A549 (cell line): ENCODE measurements at regions of chr10 and their contacts with region 1.

Region 1: DNA sequence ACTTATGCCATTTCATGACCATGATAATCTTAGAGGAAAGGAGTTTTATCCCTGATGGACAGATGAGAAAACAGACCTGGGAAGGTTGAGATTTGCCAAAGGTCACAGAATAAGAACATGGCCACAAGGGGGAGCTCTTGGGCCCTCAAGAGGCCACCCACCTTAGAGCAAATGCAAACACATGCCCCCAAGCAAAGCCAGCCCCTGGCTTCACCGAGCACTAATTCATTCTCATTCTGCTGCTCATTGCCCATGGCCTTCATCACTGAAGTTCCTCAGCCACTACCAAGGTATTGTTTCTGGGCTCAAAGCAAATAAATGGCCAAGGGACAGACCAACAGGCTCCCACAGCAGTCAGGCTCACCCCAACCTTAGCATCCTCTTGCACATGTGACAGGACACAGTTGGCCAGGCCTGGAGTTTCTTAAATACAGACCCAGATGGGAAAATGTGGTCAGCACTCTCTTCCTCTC is 44.2 kb downstream of the PDLIM1 start:
- DNase-seq: peak; percentile 48 to 80
- ATAC-seq: peak; percentile 66 to 82
- H3K4me3 ChIP-seq: no peak overlapping the region
- H3K27ac ChIP-seq: peak overlapping the region; percentile 20 to 33; a peak in 4 of 6 replicates
- H3K4me1 ChIP-seq: peaks cover 28% of the 10 kb centered on the region
- CTCF ChIP-seq: peak; percentile 92
- EP300 ChIP-seq: no peak
- POLR2A ChIP-seq: no peak
- RAD21 ChIP-seq: peak; percentile 94 to 96

Region 2: GRCh38 chr10:95183271-95184230 is 63.1 kb before region 1 on chr10:
- CTCF ChIA-PET with region 1: interaction called, 151 read pairs
- POLR2A ChIA-PET with region 1: no interaction called
- DNase-seq: peak; percentile 87 to 92
- ATAC-seq: peak; percentile 98 to 99
- H3K4me3 ChIP-seq: peak overlapping the region; percentile 57
- H3K27ac ChIP-seq: peak overlapping the region; percentile 89 to 99
- H3K4me1 ChIP-seq: peaks cover 26% of the 10 kb centered on the region
- CTCF ChIP-seq: peak; percentile 100
- EP300 ChIP-seq: no peak
- POLR2A ChIP-seq: peak; percentile 27; the same call in 1 of the 2 replicates
- RAD21 ChIP-seq: peak; percentile 79 to 98

Region 3: GRCh38 chr10:95208702-95209391 is 37.8 kb before region 1 on chr10:
- CTCF ChIA-PET with region 1: interaction called, 64 read pairs
- POLR2A ChIA-PET with region 1: no interaction called
- DNase-seq: peak in 1 of 2 experiments; percentile 37
- ATAC-seq: peak in 1 of 2 experiments; percentile 76; a peak in 4 of 6 replicates
- H3K4me3 ChIP-seq: no peak overlapping the region
- H3K27ac ChIP-seq: peak overlapping the region; percentile 61 to 84
- H3K4me1 ChIP-seq: peaks cover 21% of the 10 kb centered on the region
- CTCF ChIP-seq: peak; percentile 79
- EP300 ChIP-seq: no peak
- POLR2A ChIP-seq: no peak
- RAD21 ChIP-seq: peak; percentile 70 to 74

Region 4: DNA sequence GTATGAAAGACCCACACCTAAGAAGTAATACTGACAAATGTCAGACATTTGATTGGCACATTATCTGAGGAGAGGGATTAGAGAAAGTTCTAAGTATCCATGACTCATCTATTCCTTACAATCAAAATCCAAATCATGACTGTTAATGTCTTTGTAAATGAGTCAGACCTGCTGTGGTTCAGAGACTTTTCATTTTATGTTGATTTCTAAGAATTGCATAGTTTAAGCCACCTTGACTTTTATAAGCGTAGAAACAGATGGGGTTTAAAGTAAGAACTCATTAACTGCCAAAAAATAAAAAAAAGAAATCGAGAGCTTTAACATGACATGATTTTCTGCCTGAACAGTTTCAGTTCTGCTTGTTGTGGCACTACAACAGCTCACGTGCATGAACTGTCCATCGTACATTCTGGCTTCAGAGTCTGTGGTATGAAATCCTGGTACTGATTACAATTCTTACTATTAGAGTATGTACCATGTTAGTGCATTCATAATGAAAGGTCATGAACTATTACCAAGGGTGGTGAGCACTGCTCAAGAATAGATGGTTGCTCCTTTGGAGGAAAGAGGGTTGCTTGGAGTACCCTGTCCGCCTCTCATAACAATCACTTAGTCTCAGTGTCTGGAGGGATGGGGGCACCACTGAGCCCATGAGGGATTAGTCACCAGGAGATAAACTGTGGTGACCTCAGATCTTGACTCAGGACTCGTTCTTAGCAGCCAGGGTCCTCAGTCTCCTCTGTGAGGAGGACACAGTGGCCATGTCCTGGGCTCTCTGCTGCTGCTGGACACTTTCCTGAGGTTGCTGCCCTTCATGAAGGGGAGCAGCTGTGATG is 10.3 kb before region 1 on chr10:
- CTCF ChIA-PET with region 1: interaction called, 48 read pairs
- POLR2A ChIA-PET with region 1: no interaction called
- DNase-seq: no peak
- ATAC-seq: peak; percentile 55 to 56; a peak in 4 of 6 replicates
- H3K4me3 ChIP-seq: no peak overlapping the region
- H3K27ac ChIP-seq: peak overlapping the region; percentile 63 to 85
- H3K4me1 ChIP-seq: peaks cover 34% of the 10 kb centered on the region
- CTCF ChIP-seq: no peak
- EP300 ChIP-seq: no peak
- POLR2A ChIP-seq: no peak
- RAD21 ChIP-seq: no peak

Region 5: DNA sequence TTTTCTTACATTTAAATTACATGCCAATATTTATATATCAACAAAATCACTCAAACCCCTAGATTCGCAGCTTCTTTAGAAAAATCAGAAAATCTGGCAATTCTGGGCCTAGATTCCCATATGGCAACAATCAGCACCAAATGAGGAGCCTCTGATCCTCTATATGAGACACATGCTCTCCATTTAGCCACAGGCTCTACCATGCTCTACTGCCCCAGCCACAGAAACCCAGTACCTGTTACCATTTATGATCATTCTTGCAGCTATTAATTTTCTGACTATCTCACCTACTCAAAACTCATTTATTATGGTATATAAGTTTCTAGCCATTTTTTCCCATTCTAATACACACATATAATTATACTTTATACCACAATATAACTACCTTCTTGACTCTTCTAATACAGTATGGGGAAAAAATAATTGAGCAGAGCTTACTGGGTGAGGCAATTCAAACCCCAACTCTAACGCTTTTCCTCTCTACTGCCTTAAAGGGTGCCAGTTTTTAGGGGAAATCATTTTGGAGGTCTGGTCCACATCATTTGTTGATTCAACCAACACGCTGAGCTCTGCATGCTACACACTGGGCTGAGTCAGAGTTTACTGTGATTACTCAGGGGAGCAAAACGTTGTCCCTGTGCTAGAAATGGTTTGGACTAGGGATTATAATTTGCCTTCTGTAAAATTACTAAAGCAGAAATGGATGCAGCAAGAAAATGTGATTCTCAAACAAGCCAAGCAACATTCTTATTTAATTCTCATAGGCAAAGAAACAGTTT is 32.6 kb after region 1 on chr10:
- CTCF ChIA-PET with region 1: interaction called, 33 read pairs
- POLR2A ChIA-PET with region 1: interaction called, 3 read pairs
- DNase-seq: peak; percentile 46 to 47
- ATAC-seq: peak; percentile 77 to 78; a peak in 5 of 6 replicates
- H3K4me3 ChIP-seq: peak overlapping the region; percentile 10; the same call in 1 of the 3 replicates
- H3K27ac ChIP-seq: peak overlapping the region; percentile 78 to 83
- H3K4me1 ChIP-seq: peaks cover 92% of the 10 kb centered on the region
- CTCF ChIP-seq: no peak
- EP300 ChIP-seq: no peak
- POLR2A ChIP-seq: no peak
- RAD21 ChIP-seq: 0 out of 5 replicates have a peak, but pooled peaks of 1 of the 2 experiments have one; percentile 1

Region 6: DNA sequence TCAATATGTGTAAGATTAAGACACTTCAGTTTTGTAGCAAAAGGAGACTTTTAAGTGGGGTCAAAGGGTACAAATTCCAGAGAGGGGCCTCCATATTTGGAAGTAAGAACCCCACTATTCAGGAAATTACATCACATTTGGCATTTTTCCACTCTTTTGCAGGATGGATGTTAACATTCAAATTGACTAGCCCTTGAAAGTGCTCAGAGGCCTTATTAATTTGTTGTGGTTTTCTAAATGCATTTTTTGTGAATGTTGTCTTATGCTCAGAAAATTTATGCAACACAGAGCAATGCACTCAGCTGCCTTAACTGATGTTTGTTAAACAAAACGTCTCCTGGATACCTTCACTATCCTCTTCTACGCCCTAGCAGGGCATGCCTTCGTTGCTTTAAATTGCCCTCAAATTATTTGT is 95.1 kb after region 1 on chr10:
- CTCF ChIA-PET with region 1: interaction called, 17 read pairs
- POLR2A ChIA-PET with region 1: no interaction called
- DNase-seq: no peak
- ATAC-seq: no peak
- H3K4me3 ChIP-seq: no peak overlapping the region
- H3K27ac ChIP-seq: no peak overlapping the region
- H3K4me1 ChIP-seq: peaks cover 8% of the 10 kb centered on the region
- CTCF ChIP-seq: no peak
- EP300 ChIP-seq: no peak
- POLR2A ChIP-seq: no peak
- RAD21 ChIP-seq: no peak

Region 7: DNA sequence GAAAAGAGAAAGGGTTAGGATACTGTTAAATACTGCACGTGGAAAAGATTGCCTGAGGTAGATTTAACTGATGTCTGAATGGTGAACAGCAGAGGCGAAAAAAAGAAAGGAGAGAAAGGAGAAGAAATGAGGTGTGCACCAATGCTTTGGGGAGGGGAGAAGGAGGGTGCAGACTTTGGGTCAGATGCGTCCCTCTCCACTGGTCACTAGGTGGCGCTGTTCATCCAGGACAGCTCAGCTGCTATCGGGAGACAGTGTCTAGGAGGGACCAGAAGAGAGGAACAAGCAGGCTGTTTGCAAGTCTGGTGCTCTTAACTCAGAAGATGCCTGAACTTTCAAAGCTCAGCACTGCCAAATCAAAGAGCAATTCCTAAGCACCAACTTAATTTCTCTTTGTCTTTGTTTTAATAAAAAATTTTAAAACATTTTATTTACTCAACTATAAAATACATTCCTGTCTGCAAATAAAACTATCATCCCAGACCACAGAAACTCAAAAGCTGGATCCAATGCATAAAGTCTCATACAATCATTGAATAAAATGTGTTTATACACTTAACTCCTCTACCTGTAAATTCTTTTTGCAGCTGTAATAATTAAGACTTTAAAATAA is 128.1 kb after region 1 on chr10:
- CTCF ChIA-PET with region 1: interaction called, 637 read pairs
- POLR2A ChIA-PET with region 1: no interaction called
- DNase-seq: peak; percentile 77 to 84
- ATAC-seq: peak; percentile 97 to 99
- H3K4me3 ChIP-seq: no peak overlapping the region
- H3K27ac ChIP-seq: no peak overlapping the region
- H3K4me1 ChIP-seq: no peaks in the 10 kb centered on the region
- CTCF ChIP-seq: peak; percentile 91
- EP300 ChIP-seq: no peak
- POLR2A ChIP-seq: no peak
- RAD21 ChIP-seq: peak; percentile 85 to 94

Region 8: DNA sequence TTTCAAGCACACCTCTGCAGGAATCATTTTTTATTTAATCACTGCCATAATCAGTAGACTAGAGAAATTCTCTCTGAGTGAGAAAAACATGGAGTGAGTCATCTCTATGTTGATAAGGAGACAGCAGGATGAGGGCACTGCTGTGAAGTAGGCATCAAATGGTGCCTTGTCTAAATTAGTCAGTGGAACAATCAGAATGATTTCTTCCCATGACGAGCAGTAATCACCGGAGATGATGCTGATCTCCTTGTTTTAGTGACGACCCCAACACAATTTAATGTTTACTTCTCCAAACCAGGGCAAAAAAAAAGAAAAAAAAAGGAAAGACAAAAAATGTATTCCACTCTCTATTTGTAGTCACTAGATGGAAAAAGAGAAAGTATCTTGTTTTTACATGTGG is 238.8 kb after region 1 on chr10:
- CTCF ChIA-PET with region 1: no interaction called
- POLR2A ChIA-PET with region 1: no interaction called
- DNase-seq: no peak
- ATAC-seq: no peak
- H3K4me3 ChIP-seq: no peak overlapping the region
- H3K27ac ChIP-seq: no peak overlapping the region
- H3K4me1 ChIP-seq: no peaks in the 10 kb centered on the region
- CTCF ChIP-seq: no peak
- EP300 ChIP-seq: no peak
- POLR2A ChIP-seq: no peak
- RAD21 ChIP-seq: no peak